Activated CD8-positive, alpha-beta T cell treated with anti-CD3 and anti-CD28 coated beads for 36 hours (primary cell): ENCODE measurements at regions of chr22 and their contacts with region 1.

Region 1: GRCh38 chr22:30890686-30891442 is 77.7 kb downstream of the MORC2 start:
- DNase-seq: peak; percentile 52
- ATAC-seq: peak; percentile 79
- H3K4me3 Mint-ChIP-seq: no peak overlapping the region
- H3K27ac Mint-ChIP-seq: no peak overlapping the region
- H3K4me1 Mint-ChIP-seq: peaks cover 12% of the 10 kb centered on the region
- H3K27me3 Mint-ChIP-seq: no peaks in the 10 kb centered on the region
- CTCF ChIP-seq: peak; percentile 80

Region 2: GRCh38 chr22:30591588-30592359 is 299.1 kb before region 1 on chr22 and contains the start of gene PES1:
- CTCF ChIA-PET with region 1: no interaction called
- POLR2A ChIA-PET with region 1: no interaction called
- intact Hi-C with region 1: no loop called
- DNase-seq: peak; percentile 97
- ATAC-seq: peak; percentile 100
- H3K4me3 Mint-ChIP-seq: no peak within 1 kb of the TSS
- H3K27ac Mint-ChIP-seq: no peak within 1 kb of the TSS
- H3K4me1 Mint-ChIP-seq: peaks cover 15% of the 10 kb centered on the region
- H3K27me3 Mint-ChIP-seq: peaks cover 2% of the 10 kb centered on the region
- CTCF ChIP-seq: no peak
- total RNA-seq, gene PES1: 123 to 131 TPM

Region 3: DNA sequence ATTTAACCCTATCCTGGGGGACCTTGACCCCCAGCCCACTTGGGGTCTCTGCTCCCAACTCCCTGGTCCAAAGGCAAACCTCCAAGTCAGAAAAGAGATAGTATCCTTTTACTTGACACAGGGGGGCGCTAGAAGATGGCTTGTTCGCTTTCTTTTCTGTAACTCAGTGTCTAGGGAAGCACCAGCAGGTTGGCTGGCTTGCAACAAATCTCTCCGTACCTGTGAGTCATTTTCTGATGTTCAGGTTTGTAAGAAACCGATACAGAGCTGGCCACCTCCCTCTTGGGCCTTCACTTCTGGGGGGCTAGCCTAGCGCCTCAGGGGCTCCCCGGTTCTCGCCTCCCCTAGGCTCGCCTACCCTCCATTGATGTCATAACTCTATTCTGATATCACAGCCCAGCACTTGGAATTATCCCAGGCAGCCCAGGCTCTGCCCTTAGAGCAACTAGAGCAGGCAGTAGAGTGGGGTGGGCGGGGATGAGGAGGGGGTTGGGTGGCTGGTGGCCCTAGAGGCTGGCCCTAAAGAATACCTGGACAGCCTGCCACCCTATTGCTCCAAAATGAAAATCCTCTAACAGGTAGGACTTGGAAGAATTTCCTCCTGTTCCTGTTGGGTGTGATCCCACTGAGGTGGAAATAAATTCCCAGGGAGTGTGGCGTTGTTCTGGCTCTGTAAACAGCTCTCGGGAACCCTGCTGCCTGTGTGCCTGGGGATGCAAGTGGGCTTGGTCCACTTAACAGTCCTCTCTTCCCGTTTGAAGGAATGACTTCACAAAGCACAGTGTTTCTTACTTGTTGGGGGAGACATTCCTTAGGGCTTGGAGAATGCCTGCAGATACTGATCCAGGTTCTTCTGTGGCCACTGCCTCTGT is 126.8 kb before region 1 on chr22:
- CTCF ChIA-PET with region 1: interaction called, 18 read pairs
- POLR2A ChIA-PET with region 1: no interaction called
- intact Hi-C with region 1: no loop called
- DNase-seq: peak; percentile 75
- ATAC-seq: peak; percentile 97
- H3K4me3 Mint-ChIP-seq: no peak overlapping the region
- H3K27ac Mint-ChIP-seq: no peak overlapping the region
- H3K4me1 Mint-ChIP-seq: peaks cover 2% of the 10 kb centered on the region
- H3K27me3 Mint-ChIP-seq: no peaks in the 10 kb centered on the region
- CTCF ChIP-seq: peak; percentile 83

Region 4: DNA sequence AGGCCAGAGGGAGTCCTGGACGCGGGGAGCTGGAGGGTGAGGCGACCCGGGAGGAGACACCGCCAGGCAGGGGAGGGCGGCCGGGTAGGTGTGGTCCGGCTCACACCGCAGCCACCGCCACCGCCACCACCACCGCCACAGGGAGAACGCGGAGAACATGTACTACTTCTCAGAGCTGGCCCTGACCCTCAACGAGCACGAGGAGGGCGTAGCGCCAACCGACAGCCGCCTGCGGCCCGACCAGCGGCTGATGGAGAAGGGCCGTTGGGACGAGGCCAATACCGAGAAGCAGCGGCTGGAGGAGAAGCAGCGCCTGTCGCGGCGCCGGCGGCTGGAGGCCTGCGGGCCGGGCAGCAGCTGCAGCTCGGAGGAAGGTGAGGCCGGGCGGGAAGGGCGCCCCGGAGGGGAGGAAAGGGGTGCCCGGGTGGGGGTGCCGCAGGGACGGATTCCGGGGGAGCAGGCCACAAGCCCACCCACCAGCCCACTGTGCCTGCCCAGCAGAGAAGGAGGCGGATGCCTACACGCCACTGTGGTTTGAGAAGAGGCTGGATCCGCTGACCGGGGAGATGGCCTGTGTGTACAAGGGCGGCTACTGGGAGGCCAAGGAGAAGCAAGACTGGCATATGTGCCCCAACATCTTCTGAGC is 15.0 kb after region 1 on chr22:
- CTCF ChIA-PET with region 1: interaction called, 12 read pairs
- POLR2A ChIA-PET with region 1: no interaction called
- intact Hi-C with region 1: no loop called
- DNase-seq: no peak
- ATAC-seq: no peak
- H3K4me3 Mint-ChIP-seq: no peak overlapping the region
- H3K27ac Mint-ChIP-seq: no peak overlapping the region
- H3K4me1 Mint-ChIP-seq: peaks cover 4% of the 10 kb centered on the region
- H3K27me3 Mint-ChIP-seq: no peaks in the 10 kb centered on the region
- CTCF ChIP-seq: no peak

Region 5: DNA sequence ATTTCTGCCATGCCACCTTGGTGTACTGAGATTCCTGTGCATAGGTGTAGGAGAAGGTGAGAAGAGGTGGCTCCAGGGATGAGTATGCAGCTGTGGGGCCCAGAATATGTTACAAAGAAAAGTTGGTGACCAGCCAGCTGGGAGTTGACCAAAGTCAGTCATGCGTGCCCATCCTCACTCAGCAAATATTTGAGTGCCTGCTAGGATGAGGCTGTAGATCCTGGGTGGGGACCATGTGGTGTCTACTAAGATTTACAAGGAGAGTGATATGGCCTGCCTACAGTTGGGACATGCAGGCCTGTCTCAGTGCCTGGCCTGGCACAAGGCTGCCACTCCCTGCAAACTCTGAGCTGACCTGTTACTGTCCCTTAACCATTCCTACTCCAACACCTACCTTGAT is 288.5 kb after region 1 on chr22:
- CTCF ChIA-PET with region 1: no interaction called
- POLR2A ChIA-PET with region 1: no interaction called
- intact Hi-C with region 1: no loop called
- DNase-seq: no peak
- ATAC-seq: no peak
- H3K4me3 Mint-ChIP-seq: no peak overlapping the region
- H3K27ac Mint-ChIP-seq: no peak overlapping the region
- H3K4me1 Mint-ChIP-seq: peaks cover 10% of the 10 kb centered on the region
- H3K27me3 Mint-ChIP-seq: no peaks in the 10 kb centered on the region
- CTCF ChIP-seq: no peak